ENCODE measurements at regions of chr13 and their contacts with region 1.

Region 1: DNA sequence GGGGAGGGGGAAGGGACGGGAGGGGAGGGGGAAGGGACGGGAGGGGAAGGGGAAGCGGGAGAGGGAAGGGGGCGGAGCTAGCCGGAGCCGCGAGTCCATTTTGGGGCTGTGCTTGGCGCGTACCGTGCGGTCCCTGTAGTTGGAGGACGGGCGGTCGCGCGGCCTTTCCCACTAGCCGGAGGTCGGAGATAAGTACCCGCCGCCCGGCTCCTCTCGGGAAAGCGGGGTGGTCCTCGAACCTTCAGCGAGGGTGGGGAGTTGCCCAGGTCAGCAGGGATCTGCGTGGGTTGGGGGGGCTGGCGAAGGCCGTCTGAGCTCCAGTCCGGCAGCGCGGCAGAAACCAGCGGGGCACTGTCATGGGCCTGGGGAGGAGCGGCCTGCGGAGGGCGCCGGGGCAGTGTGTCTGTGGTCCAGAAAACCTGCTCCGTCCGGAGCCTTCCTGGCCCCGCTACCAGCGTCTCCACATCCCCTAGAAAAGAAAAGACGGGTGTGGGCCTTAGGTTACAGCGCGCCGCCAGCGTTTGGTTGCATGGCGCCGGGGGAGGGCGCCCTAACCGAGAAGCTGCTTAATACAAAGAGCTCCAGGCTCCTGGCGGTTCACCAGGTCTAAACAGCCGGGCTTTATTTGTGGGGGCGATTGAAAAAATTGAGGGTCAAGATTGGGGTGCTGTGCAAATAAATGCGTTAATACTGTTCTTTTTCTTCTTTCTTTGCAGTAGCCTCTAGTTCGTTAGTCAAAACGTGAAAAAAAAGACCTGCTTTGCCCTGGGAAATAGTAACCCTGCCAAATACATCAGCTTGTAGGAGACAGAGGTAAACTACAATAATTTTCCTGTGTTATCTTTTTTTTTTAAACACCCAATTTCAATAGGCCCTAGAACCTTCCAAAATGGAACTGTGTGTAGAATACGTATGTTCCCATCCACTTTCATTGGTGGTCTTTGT is at the start of gene TRIM13:
- DNase-seq: peak; percentile 92
- H3K4me3 ChIP-seq: peak within 1 kb of the TSS; percentile 94
- H3K27ac ChIP-seq: peak within 1 kb of the TSS; percentile 87
- H3K4me1 ChIP-seq: peaks cover 39% of the 10 kb centered on the region
- CTCF ChIP-seq: peak; percentile 97
- total RNA-seq, gene TRIM13: 9.5 and 12.5 TPM in 2 replicates

Region 2: DNA sequence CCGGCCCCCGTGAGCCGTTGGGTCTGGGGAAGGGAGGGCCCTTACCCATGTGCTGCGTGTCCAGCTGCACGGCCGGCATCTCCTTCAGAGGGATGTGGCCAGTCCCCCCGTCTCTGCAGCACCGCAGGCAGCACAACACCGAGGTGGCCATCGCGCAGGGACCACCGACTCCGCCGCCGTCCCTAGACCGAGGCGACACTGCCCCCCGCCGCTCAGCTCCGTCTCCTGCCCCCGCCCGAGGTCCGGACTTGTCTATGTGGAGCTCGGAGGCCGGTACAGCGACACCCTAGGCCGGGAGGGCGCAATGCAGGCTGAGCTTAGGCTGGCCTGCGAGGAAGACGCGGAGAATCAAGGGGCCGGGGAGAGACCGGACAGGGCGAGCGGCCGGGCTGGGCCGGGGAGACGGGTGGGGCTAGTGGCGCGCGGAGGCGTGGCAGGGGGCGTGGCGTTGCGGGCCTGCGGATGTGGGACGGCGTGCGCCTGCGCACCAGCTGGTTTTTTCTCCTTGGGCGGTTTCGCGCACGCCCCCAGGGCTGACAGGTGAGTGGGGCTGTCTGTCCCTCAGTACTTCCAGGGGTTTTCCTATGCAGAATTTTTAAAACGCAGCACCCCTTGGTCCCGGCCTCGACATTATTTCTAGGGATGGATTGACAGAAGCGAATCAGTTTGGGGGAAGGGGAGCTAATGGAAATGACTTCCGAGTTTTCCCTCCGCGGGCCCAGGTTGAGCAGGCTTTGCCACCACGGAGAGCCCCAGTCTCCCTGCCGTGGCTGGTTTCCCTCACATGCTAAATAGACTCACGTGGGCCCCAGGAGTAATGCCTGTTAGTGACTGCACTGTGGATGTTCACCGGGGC is 60.9 kb before region 1 on chr13 and contains the start of gene SPRYD7:
- CTCF ChIA-PET with region 1: no interaction called
- POLR2A ChIA-PET with region 1: interaction called, 3 read pairs
- intact Hi-C with region 1: loop called (anchors 1 kb)
- DNase-seq: peak; percentile 98
- H3K4me3 ChIP-seq: peak within 1 kb of the TSS; percentile 81
- H3K27ac ChIP-seq: peak within 1 kb of the TSS; percentile 34
- H3K4me1 ChIP-seq: peaks cover 29% of the 10 kb centered on the region
- CTCF ChIP-seq: peak; percentile 84
- total RNA-seq, gene SPRYD7: 5.0 and 6.8 TPM in 2 replicates

Region 3: GRCh38 chr13:50016444-50016843 is 19.2 kb after region 1 on chr13:
- CTCF ChIA-PET with region 1: no interaction called
- POLR2A ChIA-PET with region 1: interaction called, 3 read pairs
- intact Hi-C with region 1: loop called (anchors 2 kb)
- DNase-seq: no peak
- H3K4me3 ChIP-seq: no peak overlapping the region
- H3K27ac ChIP-seq: no peak overlapping the region
- H3K4me1 ChIP-seq: no peaks in the 10 kb centered on the region
- CTCF ChIP-seq: no peak

Region 4: GRCh38 chr13:50261130-50261901 is 264.1 kb after region 1 on chr13:
- CTCF ChIA-PET with region 1: no interaction called
- POLR2A ChIA-PET with region 1: no interaction called
- intact Hi-C with region 1: no loop called
- DNase-seq: no peak
- H3K4me3 ChIP-seq: no peak overlapping the region
- H3K27ac ChIP-seq: no peak overlapping the region
- H3K4me1 ChIP-seq: peaks cover 10% of the 10 kb centered on the region
- CTCF ChIP-seq: no peak